Activated naive CD4-positive, alpha-beta T cell treated with anti-CD3 and anti-CD28 coated beads for 36 hours (primary cell): ENCODE measurements at regions of chr2 and their contacts with region 1.

Region 1: GRCh38 chr2:177263451-177264208 is 897 bp downstream of the NFE2L2 start:
- DNase-seq: peak; percentile 95
- H3K4me3 Mint-ChIP-seq: peak overlapping the region; percentile 92
- H3K27ac Mint-ChIP-seq: peak overlapping the region; percentile 99
- H3K4me1 Mint-ChIP-seq: peaks cover 53% of the 10 kb centered on the region
- H3K27me3 Mint-ChIP-seq: no peaks in the 10 kb centered on the region

Region 2: GRCh38 chr2:177229448-177230242 is 34.0 kb before region 1 on chr2:
- CTCF ChIA-PET with region 1: interaction called, 12 read pairs
- intact Hi-C with region 1: no loop called
- DNase-seq: no peak
- H3K4me3 Mint-ChIP-seq: no peak overlapping the region
- H3K27ac Mint-ChIP-seq: peak overlapping the region; percentile 80
- H3K4me1 Mint-ChIP-seq: peaks cover 41% of the 10 kb centered on the region
- H3K27me3 Mint-ChIP-seq: no peaks in the 10 kb centered on the region

Region 3: GRCh38 chr2:177252808-177253531 is 10.7 kb before region 1 on chr2:
- CTCF ChIA-PET with region 1: interaction called, 9 read pairs
- intact Hi-C with region 1: loop called (anchors 1 kb)
- DNase-seq: no peak
- H3K4me3 Mint-ChIP-seq: no peak overlapping the region
- H3K27ac Mint-ChIP-seq: peak overlapping the region; percentile 88
- H3K4me1 Mint-ChIP-seq: peaks cover 88% of the 10 kb centered on the region
- H3K27me3 Mint-ChIP-seq: no peaks in the 10 kb centered on the region

Region 4: DNA sequence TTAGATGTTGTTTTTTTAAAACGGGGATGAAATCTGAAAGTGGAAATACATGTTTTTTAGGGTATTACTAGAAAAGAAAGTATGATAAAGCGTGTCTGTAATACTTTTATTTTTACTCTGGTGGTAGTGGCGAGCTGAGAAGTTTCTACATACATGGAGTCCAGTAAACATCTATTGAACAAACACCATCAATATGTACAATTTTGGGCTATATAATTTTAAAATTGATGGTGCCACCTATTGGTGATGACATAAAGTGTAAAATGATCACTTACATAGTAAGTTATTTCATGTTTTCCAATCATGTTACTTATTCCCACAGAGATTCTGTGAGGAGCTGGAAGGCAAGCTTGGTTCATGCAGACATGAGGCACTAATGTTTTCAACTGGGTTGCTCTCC is 32.4 kb after region 1 on chr2:
- CTCF ChIA-PET with region 1: interaction called, 17 read pairs
- intact Hi-C with region 1: loop called (anchors 1 kb)
- DNase-seq: no peak
- H3K4me3 Mint-ChIP-seq: no peak overlapping the region
- H3K27ac Mint-ChIP-seq: no peak overlapping the region
- H3K4me1 Mint-ChIP-seq: peaks cover 17% of the 10 kb centered on the region
- H3K27me3 Mint-ChIP-seq: no peaks in the 10 kb centered on the region

Region 5: GRCh38 chr2:177413703-177414102 is 150.1 kb after region 1 on chr2:
- CTCF ChIA-PET with region 1: interaction called, 10 read pairs
- intact Hi-C with region 1: loop called (anchors 1 kb)
- DNase-seq: no peak
- H3K4me3 Mint-ChIP-seq: no peak overlapping the region
- H3K27ac Mint-ChIP-seq: no peak overlapping the region
- H3K4me1 Mint-ChIP-seq: peaks cover 41% of the 10 kb centered on the region
- H3K27me3 Mint-ChIP-seq: no peaks in the 10 kb centered on the region

Region 6: GRCh38 chr2:177552422-177553175 is 289.0 kb after region 1 on chr2:
- CTCF ChIA-PET with region 1: no interaction called
- intact Hi-C with region 1: loop called (anchors 1 kb)
- DNase-seq: peak; percentile 93
- H3K4me3 Mint-ChIP-seq: peak overlapping the region; percentile 88
- H3K27ac Mint-ChIP-seq: peak overlapping the region; percentile 99
- H3K4me1 Mint-ChIP-seq: peaks cover 8% of the 10 kb centered on the region
- H3K27me3 Mint-ChIP-seq: no peaks in the 10 kb centered on the region

Region 7: DNA sequence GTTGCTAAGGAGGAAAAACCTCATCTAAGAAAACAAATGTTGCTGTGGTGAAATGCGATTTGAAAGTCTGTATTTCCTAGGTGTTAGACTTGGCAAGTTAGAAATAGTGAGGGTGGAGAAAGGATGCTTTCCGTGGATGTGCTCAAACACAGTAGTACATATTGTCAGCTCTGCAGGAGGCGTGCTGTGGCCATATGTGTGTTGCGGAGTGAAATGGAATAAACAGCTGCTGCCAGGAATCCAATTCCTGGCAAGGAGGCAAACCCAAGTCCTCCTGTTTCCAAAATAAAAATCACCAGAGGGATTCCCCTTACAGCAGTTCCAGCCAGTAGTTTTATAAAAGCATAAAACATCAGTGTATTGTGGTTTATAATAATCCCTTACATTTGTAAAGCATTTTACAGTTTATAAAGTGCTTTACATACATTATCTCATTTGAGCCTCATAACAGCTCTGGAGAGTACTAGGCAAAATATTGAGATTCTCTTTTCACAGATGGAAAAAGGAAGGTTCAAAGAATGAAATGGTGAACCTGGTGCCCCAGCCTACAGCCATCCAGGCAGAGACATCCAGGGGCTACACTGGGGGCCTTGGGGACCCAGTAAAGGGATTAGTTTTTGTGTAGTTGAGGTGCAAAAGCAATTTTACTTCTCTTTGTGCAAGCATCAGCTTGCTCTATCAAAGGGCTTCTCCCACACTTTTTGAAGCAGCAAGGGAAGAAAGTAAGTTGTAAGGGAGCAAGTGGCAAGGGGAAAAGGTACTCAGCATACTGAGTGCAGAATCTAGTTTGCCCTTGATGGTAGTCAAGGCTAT is 334.9 kb after region 1 on chr2:
- CTCF ChIA-PET with region 1: no interaction called
- intact Hi-C with region 1: no loop called
- DNase-seq: no peak
- H3K4me3 Mint-ChIP-seq: no peak overlapping the region
- H3K27ac Mint-ChIP-seq: no peak overlapping the region
- H3K4me1 Mint-ChIP-seq: no peaks in the 10 kb centered on the region
- H3K27me3 Mint-ChIP-seq: no peaks in the 10 kb centered on the region